ENCODE measurements at regions of chr11 and their contacts with region 1.

Region 1: DNA sequence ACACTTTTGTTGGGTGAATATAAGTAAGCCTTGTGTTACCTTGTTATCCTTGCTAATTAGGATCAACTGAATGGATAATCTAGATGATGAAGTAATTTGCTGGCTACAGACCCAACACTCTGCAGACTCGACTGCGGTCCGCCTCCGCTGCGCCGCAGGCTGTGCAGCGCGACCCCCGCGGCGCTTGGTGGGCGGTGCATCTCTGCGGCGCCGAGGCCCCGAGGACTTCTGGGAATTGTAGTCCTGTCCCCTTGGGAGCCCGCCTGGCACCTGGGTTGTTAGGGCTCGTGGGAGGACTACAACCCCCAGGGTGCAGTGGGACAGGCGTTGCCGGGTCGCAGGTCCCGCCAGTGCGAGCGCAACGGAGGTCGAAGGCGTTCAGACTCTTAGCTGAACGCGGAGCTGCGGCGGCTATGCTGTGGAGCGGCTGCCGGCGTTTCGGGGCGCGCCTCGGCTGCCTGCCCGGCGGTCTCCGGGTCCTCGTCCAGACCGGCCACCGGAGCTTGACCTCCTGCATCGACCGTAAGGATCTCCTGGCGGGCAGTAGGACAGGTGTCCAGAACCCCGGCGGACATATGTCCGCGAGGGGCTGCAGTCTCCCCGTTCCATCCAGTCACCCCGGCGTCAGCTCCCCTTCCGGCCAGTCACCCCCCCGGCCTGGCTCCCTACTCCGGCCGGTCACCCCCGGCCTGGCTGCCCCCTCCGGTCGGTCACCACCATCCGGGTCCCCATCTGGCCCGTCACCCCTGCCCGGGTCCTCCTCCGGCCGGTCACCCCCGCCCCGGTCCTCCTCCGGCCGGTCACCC is at the starts of genes ACAD8 and THYN1:
- DNase-seq: peak; percentile 99
- H3K4me3 ChIP-seq: peak within 1 kb of the TSS; percentile 64
- H3K4me3 Mint-ChIP-seq: peak within 1 kb of the TSS; percentile 89
- H3K27ac Mint-ChIP-seq: peak within 1 kb of the TSS; percentile 63
- H3K4me1 ChIP-seq: 0 out of 2 replicates have a peak, but pooled peaks cover 10% of the 10 kb centered on the region
- H3K4me1 Mint-ChIP-seq: peaks cover 7% of the 10 kb centered on the region
- H3K27me3 ChIP-seq: no peaks in the 10 kb centered on the region
- H3K27me3 Mint-ChIP-seq: no peaks in the 10 kb centered on the region
- CTCF ChIP-seq: peak; percentile 46 to 47
- total RNA-seq, gene ACAD8: 48.7 and 52.0 TPM in 2 replicates
- total RNA-seq, gene THYN1: 88.3 and 94.5 TPM in 2 replicates

Region 2: DNA sequence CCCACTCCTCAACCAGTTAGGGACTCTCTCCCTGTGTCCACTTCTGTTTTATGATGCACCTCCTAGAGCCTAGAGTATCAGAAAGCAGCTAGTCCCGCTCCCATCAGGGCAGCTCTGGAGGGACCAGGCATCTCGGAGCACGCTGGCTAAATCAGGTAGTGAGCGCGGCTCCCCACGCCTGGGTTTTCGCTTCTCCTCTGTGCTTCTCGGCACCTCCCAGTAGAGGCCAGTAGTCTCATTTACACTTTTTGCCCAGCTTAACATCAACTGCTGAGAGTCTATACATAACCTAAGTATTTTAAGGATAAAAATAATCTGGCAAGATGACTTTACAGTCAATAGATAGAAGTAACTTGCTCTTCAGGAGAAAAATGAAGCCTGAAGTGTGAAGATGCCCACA is 1194.9 kb before region 1 on chr11:
- CTCF ChIA-PET with region 1: no interaction called
- POLR2A ChIA-PET with region 1: interaction called, 10 read pairs
- intact Hi-C with region 1: no loop called
- DNase-seq: no peak
- H3K4me3 ChIP-seq: no peak overlapping the region
- H3K4me3 Mint-ChIP-seq: no peak overlapping the region
- H3K27ac Mint-ChIP-seq: no peak overlapping the region
- H3K4me1 ChIP-seq: no peaks in the 10 kb centered on the region
- H3K4me1 Mint-ChIP-seq: no peaks in the 10 kb centered on the region
- H3K27me3 ChIP-seq: no peaks in the 10 kb centered on the region
- H3K27me3 Mint-ChIP-seq: peaks cover 7% of the 10 kb centered on the region
- CTCF ChIP-seq: no peak

Region 3: DNA sequence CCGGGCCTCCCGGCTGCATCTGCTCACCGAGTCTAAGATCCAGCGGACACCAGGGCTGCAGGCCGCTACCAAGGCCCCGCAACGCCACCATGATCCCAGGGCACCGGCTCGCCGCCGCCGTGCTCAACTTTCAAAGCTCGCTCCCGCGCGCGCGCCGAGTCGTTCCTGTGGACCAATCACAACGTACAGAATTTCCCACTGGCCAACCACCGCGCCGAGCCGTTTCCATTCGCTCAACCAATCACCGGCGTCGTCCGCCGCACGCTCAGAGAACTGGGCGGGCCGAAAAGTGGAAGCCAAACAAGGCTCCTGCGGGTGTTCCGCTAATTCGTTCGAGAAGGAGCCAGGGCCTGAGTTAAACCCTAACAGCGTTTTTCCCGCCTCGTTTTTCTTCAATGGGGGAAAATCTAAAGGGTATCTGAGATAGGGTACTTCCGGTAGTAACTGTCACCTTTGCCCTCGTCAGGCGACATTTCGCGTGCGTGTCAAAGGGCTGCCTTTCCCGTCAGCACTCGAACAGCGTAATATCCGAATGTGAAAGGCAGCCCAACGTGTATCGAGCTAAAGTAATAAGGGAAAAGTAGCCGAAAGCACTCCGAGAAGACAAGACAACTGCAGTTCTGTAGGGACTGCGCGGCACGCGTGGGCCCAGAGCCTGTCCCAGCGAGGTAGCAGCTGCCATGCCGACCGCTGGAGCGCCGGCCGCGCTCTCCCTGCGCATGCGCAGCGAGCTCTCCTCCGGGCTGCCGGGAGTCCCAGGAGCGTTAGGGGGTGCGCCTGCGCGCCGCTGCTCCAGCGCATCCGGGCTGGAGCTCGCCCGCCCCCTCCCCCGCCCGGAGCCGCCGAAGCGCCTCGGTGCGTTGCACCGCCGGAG is 29.3 kb before region 1 on chr11 and contains the starts of genes NCAPD3 and VPS26B:
- CTCF ChIA-PET with region 1: interaction called, 8 read pairs
- POLR2A ChIA-PET with region 1: interaction called, 9 read pairs
- intact Hi-C with region 1: loop called (anchors 1 kb)
- DNase-seq: peak; percentile 99
- H3K4me3 ChIP-seq: peak within 1 kb of the TSS; percentile 76
- H3K4me3 Mint-ChIP-seq: peak within 1 kb of the TSS; percentile 84
- H3K27ac Mint-ChIP-seq: peak within 1 kb of the TSS; percentile 66
- H3K4me1 ChIP-seq: peaks cover 19% of the 10 kb centered on the region
- H3K4me1 Mint-ChIP-seq: peaks cover 11% of the 10 kb centered on the region
- H3K27me3 ChIP-seq: no peaks in the 10 kb centered on the region
- H3K27me3 Mint-ChIP-seq: no peaks in the 10 kb centered on the region
- CTCF ChIP-seq: no peak
- total RNA-seq, gene NCAPD3: 97.8 and 108 TPM in 2 replicates
- total RNA-seq, gene VPS26B: 71.4 and 78.1 TPM in 2 replicates

Region 4: DNA sequence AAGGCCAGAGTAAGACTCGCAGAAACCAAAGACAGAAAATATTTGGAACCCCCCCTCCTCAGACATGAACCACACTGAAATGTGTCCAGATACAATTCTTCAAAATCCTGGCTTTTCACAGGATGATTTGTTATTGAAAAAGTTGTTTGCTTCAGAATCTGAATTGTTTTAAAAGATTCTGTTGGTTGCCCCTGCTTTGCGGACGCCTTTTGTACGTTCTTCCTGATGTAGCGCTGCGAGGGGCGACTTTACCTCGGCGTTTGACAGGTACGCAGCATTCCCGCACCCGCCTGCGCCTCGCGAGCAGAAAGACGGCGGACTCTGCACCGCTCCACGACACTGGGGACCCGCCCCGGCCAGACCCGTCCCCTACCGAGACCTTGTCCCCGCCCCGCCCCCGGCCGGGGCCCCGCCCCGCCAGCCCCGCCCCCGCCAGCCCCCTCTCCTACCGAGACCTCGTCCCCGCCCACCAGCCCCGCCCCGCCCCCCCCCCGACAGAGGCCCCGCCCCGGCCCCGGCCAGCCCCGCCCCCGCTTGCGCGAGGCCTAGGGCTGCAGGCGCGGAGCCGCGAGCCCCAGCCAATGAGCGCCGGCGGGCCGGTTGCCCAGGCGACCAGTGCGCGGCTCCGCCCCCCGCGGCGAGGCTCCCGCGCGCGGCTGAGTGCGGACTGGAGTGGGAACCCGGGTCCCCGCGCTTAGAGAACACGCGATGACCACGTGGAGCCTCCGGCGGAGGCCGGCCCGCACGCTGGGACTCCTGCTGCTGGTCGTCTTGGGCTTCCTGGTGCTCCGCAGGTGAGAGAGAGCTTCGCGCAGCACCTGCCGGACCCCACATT is 78.2 kb after region 1 on chr11 and contains the start of gene GLB1L2:
- CTCF ChIA-PET with region 1: no interaction called
- POLR2A ChIA-PET with region 1: no interaction called
- intact Hi-C with region 1: loop called (anchors 5 kb)
- DNase-seq: peak; percentile 92 to 94
- H3K4me3 ChIP-seq: peak within 1 kb of the TSS; percentile 90
- H3K4me3 Mint-ChIP-seq: peak within 1 kb of the TSS; percentile 86
- H3K27ac Mint-ChIP-seq: peak within 1 kb of the TSS; percentile 33
- H3K4me1 ChIP-seq: peaks cover 11% of the 10 kb centered on the region
- H3K4me1 Mint-ChIP-seq: peaks cover 30% of the 10 kb centered on the region
- H3K27me3 ChIP-seq: no peaks in the 10 kb centered on the region
- H3K27me3 Mint-ChIP-seq: peaks cover 27% of the 10 kb centered on the region
- CTCF ChIP-seq: no peak
- total RNA-seq, gene GLB1L2: 15.8 TPM in 2 replicates

Measured in Caco-2 (cell line).